Breast epithelium (tissue), 4 donors: ENCODE measurements at regions of chr11 and their contacts with region 1.

Region 1: DNA sequence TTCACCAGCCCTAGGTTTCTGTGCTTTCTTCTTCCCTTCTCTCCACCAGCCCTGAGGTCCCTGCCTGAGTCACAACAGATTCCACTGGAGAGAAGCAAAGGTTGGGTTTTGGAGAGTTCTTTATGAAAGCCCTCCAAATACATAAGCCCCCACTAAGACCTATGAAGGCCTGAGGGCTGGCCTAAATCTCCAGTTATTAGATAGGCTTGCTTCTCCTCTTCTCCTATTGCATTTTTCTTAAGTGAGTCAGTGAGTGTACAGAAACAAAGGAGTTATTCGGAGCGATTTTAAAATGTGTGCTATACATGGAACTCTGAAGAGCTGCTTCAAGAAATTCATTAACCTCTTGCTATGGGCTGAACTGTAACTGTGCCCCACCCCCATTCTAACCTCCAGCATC is 1057.3 kb downstream of the OPCML start:
- DNase-seq: no peak
- H3K4me3 ChIP-seq: no peak overlapping the region
- H3K27ac ChIP-seq: no peak overlapping the region
- H3K4me1 ChIP-seq: no peaks in the 10 kb centered on the region
- H3K27me3 ChIP-seq: no peaks in the 10 kb centered on the region
- CTCF ChIP-seq: no peak
- POLR2A ChIP-seq: no peak

Region 2: GRCh38 chr11:132911186-132911585 is 436.2 kb after region 1 on chr11:
- intact Hi-C with region 1: loop called (anchors 5 kb)
- DNase-seq: no peak
- H3K4me3 ChIP-seq: no peak overlapping the region
- H3K27ac ChIP-seq: no peak overlapping the region
- H3K4me1 ChIP-seq: no peaks in the 10 kb centered on the region
- H3K27me3 ChIP-seq: no peaks in the 10 kb centered on the region
- CTCF ChIP-seq: no peak
- POLR2A ChIP-seq: no peak